ENCODE measurements at regions of chr2 and their contacts with region 1.

Region 1: DNA sequence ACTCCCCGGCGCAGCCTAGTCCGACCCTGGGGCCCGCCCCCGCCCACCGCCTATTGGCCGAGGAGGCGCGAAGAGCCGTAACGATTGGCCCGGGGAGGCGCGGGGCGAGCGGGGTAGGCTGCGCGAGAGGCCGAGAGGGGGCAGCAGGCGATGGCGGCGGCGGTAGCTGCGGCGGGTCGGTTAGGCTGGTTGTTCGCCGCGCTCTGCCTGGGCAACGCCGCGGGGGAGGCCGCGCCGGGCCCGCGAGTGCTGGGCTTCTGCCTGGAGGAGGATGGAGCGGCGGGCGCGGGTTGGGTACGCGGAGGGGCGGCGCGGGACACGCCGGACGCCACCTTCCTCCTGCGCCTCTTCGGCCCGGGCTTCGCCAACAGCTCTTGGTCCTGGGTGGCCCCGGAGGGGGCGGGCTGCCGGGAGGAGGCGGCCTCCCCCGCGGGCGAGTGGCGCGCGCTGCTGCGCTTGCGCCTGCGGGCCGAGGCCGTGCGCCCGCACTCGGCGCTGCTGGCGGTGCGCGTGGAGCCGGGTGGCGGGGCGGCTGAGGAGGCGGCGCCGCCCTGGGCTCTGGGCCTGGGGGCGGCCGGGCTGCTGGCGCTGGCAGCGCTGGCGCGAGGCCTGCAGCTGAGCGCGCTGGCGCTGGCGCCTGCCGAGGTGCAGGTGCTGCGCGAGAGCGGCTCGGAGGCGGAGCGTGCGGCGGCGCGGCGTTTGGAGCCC is at the start of gene CNNM3:
- DNase-seq: peak; percentile 93
- H3K4me3 ChIP-seq: peak within 1 kb of the TSS; percentile 47
- CTCF ChIP-seq: peak; percentile 55

Region 2: DNA sequence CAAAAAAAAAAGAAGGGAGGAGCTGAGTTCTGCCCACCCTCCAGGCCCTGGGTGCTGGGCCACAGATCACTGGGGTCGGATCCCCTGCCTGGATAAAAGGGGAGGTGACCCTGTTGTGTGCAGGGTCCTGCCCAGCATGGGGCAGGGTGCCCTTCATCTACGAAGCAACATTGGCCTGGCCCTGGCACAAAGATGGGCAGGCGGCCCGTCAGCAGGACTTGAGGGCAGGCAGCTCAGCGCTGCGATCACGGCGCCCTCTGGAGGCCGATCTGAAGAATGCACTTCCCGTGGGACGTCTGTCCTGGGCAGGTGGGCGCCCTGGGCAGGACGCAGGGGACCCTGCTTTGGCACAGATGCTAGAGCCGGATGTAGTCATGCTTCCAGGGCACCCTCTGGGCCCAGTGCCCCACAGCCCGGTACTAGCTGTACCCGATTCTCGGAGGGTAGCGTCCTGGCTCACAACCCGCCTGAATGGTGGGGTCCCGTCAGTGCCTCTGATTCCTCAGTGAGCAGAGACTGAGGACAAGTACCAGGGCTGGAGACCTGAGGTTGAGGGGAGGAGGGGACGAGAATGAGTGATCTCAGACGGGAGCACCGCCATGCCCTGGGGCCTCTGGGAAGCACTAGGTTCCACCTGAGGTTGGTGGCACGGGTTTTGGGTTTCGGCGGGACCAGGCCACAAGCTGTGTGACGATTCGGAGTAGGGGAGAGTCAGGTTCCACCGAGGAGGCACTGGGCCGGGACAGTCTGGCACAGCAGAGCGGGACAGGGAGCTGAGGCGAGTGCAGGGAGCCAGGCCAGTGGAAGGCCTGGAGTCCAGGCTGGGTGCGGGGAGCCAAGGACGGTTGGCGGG is 261.8 kb before region 1 on chr2:
- in situ Hi-C with region 1: loop called (anchors 25 kb)
- DNase-seq: peak; percentile 50
- H3K4me3 ChIP-seq: no peak overlapping the region
- CTCF ChIP-seq: peak; percentile 96

Region 3: GRCh38 chr2:96602330-96602823 is 213.9 kb before region 1 on chr2:
- in situ Hi-C with region 1: no loop called
- DNase-seq: no peak
- H3K4me3 ChIP-seq: no peak overlapping the region
- CTCF ChIP-seq: no peak

Region 4: GRCh38 chr2:96685577-96686459 is 130.5 kb before region 1 on chr2:
- in situ Hi-C with region 1: loop called (anchors 25 kb)
- DNase-seq: peak; percentile 25
- H3K4me3 ChIP-seq: no peak overlapping the region
- CTCF ChIP-seq: no peak

Region 5: DNA sequence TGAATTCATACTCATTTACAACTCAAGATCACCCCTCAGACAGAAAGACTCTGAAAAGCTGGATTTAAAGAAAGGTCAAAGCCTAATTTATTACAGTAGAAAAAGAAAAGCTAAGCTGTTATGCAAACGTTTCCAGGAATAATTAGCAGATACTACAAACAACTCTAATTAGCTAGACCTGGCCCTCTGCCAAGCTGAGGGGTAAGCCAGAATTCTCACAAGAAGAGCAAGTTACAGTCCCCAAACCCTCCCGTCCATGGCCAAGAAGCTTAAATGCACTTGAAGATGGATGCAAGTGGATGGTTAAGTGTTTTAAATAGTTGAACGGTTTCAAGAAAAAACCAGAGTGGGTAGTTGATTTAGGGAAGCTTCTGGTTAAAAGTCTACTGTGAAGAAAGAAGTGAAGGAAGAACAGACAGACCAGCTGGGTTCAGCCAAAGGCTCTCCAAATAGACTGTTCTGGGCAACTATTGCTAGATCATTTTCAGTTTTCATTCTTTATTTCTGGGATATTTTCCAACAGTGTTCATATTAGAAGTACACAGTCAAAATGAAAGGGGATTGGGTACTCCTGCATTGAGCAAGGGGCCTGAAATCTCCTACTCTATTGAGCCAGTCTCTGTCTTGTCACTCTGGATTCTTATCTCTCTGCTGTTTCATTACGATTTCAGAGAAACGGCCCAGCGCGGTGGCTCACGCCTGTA is 81.2 kb before region 1 on chr2:
- in situ Hi-C with region 1: no loop called
- DNase-seq: no peak
- H3K4me3 ChIP-seq: no peak overlapping the region
- CTCF ChIP-seq: no peak

Region 6: GRCh38 chr2:96747136-96747535 is 69.1 kb before region 1 on chr2:
- in situ Hi-C with region 1: no loop called
- DNase-seq: no peak
- H3K4me3 ChIP-seq: no peak overlapping the region
- CTCF ChIP-seq: no peak

Measured in astrocyte of the spinal cord (primary cell).